Psoas muscle (tissue), 8 donors: ENCODE measurements at regions of chr17 and their contacts with region 1.

Region 1: DNA sequence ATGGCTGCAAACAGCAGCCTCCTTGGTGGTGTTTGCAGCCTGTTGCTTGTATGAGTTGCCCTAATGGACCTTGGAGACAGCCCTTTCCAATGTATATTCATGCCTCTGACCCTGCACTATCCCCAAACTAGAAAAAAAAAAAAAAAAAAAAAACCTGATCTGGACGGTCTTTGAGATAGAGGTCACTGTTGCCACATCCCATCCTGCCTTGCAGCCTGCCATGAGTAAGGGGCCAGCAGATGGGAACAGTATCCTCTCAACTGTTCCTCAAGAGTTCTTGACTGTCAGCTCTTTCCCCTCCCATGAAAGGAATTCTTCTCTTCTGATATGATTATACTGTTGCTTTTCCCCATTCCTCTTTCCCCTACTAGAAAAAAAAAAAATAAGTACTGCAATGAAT is 152.4 kb downstream of the SSH2 start:
- DNase-seq: no peak
- ATAC-seq: no peak
- H3K4me3 ChIP-seq: no peak overlapping the region
- H3K27ac ChIP-seq: no peak overlapping the region
- H3K4me1 ChIP-seq: peaks cover 9% of the 10 kb centered on the region
- H3K27me3 ChIP-seq: no peaks in the 10 kb centered on the region
- CTCF ChIP-seq: no peak

Region 2: DNA sequence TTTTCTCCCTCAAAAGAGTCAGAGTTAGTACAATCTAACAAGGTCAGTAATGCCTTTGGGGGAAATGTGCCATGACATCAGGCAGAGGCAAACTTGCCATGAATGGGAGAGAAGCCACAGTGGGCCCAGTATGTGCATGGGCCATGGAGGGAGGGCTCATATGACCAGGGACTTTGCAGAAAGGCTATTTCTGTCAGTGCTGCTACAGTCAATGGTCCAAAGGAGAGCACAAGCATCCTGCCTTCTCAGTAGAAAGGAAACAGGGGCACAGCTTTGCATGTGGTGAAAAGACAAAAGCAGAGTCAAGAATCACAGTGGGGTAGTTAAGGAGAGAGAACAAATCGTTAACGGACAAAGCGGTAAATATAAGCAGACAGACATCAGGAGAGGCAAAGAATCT is 143.8 kb before region 1 on chr17:
- intact Hi-C with region 1: loop called (anchors 1 to 5 kb)
- DNase-seq: no peak
- ATAC-seq: peak in 2 of 4 donors; percentile 30 to 46
- H3K4me3 ChIP-seq: no peak overlapping the region
- H3K27ac ChIP-seq: peak overlapping the region; percentile 94
- H3K4me1 ChIP-seq: peaks cover 64% of the 10 kb centered on the region
- H3K27me3 ChIP-seq: no peaks in the 10 kb centered on the region
- CTCF ChIP-seq: no peak

Region 3: DNA sequence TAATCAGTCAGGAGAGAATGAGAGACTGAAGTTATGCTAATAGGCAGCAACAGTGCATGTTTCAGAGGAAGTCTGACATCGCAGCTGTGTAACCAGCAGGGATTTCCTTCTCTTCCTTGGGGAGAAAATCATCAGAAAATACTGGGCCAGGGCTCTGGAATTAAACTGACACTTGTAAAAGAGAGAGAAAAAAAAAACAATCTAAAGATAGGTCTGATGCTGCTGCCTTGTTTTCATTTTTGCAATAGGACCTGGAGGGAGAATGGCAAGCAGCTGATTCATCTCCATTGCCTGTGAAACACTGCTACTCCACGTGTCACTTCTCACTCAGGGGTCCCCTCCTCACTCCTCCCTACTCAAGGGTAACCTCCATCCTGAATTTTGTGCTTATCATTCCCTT is 137.2 kb before region 1 on chr17:
- intact Hi-C with region 1: loop called in 1 of 2 experiments (anchors 1 kb)
- DNase-seq: no peak
- ATAC-seq: peak; percentile 51 to 64 (median 57)
- H3K4me3 ChIP-seq: peak overlapping the region; percentile 56
- H3K27ac ChIP-seq: peak overlapping the region; percentile 94
- H3K4me1 ChIP-seq: peaks cover 78% of the 10 kb centered on the region
- H3K27me3 ChIP-seq: no peaks in the 10 kb centered on the region
- CTCF ChIP-seq: no peak

Region 4: DNA sequence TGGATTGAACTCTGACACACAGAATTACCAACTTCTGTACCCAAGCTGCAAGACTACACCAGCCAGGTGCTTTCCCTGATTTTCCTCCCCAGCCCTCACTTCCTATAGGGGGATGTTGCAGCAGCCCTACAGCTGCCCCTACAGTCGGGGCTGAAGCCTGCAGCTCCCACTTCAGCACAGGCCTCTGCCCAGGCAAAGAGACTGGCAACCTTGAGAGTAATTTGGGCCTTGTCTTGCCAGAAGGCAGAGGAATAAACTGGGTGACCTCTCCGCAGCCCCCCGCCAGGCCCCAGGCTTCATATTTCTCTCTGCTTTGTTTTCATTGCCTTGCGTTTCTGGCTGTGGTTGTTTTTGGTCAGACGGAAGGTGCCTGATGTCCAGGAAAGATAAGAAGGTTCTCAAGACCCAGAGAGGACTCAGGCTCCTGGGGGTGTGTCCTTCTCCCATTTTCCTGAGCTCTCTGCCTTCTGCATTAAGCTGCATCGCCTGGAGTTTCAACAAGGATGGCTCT is 425.9 kb after region 1 on chr17:
- intact Hi-C with region 1: no loop called
- DNase-seq: no peak
- ATAC-seq: no peak
- H3K4me3 ChIP-seq: no peak overlapping the region
- H3K27ac ChIP-seq: no peak overlapping the region
- H3K4me1 ChIP-seq: no peaks in the 10 kb centered on the region
- H3K27me3 ChIP-seq: peaks cover 0 to 7% (median 3%) of the 10 kb centered on the region in 3 donors
- CTCF ChIP-seq: no peak